Activated CD4-positive, alpha-beta T cell treated with anti-CD3 and anti-CD28 coated beads for 36 hours (primary cell): ENCODE measurements at regions of chr5 and their contacts with region 1.

Region 1: GRCh38 chr5:14644623-14645237 is 19.8 kb upstream of the OTULIN start:
- DNase-seq: no peak
- ATAC-seq: no peak
- H3K4me3 Mint-ChIP-seq: no peak overlapping the region
- H3K27ac Mint-ChIP-seq: no peak overlapping the region
- H3K4me1 Mint-ChIP-seq: no peaks in the 10 kb centered on the region
- H3K27me3 Mint-ChIP-seq: peaks cover 4% of the 10 kb centered on the region

Region 2: DNA sequence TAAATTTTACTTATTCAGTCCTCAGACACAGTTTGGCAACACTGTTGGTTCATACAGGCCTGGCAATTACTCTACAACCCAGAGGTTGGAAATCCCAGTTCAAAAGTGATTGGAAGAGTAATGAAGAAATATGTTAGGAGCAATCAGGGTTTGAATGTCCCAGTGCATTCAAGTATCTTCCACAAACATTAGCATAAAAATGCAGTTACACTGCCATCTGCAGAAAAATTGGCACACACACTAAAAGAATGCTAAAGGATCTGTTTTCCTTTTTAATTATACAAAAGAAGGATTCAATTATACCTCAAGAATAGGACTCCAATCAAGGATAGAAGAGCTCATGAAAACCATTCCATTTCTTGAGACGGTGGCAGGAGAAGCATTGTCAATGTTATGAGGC is 830.4 kb before region 1 on chr5:
- CTCF ChIA-PET with region 1: no interaction called
- POLR2A ChIA-PET with region 1: no interaction called
- intact Hi-C with region 1: no loop called
- DNase-seq: no peak
- ATAC-seq: no peak
- H3K4me3 Mint-ChIP-seq: no peak overlapping the region
- H3K27ac Mint-ChIP-seq: no peak overlapping the region
- H3K4me1 Mint-ChIP-seq: no peaks in the 10 kb centered on the region
- H3K27me3 Mint-ChIP-seq: no peaks in the 10 kb centered on the region

Region 3: DNA sequence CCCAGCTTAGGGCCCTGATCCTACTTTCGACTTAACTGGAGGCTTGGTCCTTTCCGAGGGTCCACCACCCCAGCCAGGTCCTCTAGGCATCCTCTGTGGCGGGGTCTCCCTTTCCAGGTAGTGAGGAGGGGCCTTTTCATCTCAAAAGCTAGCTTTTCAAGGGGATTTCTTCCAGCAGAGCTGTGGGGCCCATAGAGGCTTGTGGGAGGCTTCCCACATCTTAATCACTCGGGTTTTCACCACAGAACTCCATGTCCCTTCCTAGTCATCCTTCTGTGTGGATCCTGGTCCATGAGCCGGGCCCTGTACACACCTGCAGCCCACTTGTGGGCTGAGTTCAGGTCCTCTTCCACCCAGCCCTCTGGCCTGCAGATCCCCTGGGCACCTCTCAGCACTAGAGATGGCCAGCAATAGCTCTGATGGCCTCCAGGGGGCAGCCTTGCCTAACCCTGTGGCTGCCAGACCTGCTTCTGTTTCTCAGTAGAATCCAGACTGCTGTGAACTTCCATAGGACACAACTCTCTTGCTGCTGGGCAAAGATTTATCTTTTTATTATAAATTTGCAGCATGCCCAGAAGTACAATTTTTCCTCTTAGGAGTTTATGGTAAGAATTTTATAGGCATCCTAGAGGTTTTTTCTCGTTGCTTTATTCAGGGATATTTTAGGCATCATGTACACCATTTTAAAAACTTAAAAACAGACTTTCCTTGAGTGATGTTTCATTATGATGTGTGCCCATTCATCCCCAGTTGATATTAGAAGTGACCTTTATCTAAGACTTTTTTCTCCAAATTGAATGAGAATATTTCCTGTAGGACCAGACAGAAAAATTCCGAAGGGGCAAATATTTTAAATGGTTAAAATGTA is 292.7 kb before region 1 on chr5:
- CTCF ChIA-PET with region 1: interaction called, 47 read pairs
- POLR2A ChIA-PET with region 1: interaction called, 3 read pairs
- intact Hi-C with region 1: loop called (anchors 1 kb)
- DNase-seq: peak; percentile 75
- ATAC-seq: peak; percentile 91
- H3K4me3 Mint-ChIP-seq: no peak overlapping the region
- H3K27ac Mint-ChIP-seq: no peak overlapping the region
- H3K4me1 Mint-ChIP-seq: no peaks in the 10 kb centered on the region
- H3K27me3 Mint-ChIP-seq: no peaks in the 10 kb centered on the region

Region 4: DNA sequence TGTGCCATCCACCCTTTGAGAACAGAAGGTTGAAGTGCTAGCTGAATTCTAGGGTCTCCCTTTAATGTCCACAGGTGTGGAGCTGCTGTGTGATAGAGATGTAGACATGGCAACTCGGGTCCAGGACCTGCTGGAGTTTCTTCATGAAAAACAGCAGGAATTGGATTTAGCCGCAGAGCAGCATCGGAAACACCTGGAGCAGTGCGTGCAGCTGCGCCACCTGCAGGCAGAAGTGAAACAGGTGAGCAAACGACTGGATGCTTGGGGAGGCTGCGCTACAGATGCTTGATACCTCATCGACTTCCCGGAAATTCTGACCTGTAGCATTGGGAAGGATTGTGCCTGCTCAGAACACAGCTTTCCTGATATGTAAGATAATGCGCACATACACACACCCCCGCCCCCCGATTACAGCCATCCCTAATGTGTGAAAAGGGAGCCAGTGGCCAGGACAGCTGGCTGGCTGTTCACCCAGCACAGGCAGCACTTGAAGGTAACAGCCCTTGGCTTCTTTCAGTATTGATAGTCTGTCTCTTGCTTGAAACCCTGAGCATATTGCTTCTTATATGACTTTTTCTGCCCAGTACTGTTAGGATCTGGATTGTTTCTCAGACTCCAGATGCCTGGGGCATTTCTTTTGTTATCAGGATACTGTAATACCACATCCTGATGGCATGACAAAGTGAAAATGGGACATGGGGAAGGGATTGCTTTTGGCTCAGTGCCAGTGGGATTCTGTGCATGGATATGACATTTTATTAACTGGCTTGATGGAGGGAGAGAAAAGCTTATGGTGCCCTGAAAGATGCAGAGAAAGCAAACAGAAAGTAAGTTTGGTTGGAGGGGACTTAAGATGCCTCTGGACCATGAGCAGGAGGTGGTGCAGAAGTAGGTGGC is 279.9 kb before region 1 on chr5:
- CTCF ChIA-PET with region 1: interaction called, 124 read pairs
- POLR2A ChIA-PET with region 1: no interaction called
- intact Hi-C with region 1: loop called (anchors 1 kb)
- DNase-seq: peak; percentile 42
- ATAC-seq: peak; percentile 33
- H3K4me3 Mint-ChIP-seq: no peak overlapping the region
- H3K27ac Mint-ChIP-seq: no peak overlapping the region
- H3K4me1 Mint-ChIP-seq: peaks cover 23% of the 10 kb centered on the region
- H3K27me3 Mint-ChIP-seq: no peaks in the 10 kb centered on the region

Region 5: DNA sequence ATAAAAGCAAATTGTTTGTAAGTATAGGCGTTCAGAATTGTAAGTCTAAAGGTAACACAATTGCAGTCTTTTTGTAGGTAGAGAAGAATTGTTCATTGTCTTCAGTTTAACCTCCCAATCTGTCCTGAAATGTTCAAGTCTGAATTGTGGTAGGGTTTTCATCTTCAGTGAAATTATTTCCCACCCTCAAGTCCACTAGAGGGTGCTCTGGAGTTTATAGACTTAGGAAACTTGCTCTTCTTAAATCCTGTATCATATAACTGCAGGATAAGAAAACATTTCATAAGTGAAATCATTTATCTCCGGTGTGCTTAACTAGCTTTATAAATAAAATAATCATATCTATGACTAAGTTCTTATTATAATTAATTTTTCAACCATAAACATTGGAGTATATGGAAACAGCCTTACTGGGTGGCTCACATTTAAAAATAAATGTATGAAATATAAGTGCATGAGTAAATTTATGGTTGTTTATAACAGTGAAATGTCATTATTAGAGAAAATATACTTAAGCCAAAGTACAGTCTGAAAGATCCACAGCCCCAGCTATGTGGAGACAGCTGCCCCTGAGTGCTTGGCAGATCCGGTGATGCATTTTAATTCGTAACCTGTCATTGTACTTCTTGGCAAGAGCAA is 245.6 kb before region 1 on chr5:
- CTCF ChIA-PET with region 1: interaction called, 65 read pairs
- POLR2A ChIA-PET with region 1: no interaction called
- intact Hi-C with region 1: loop called (anchors 1 kb)
- DNase-seq: peak; percentile 30
- ATAC-seq: no peak
- H3K4me3 Mint-ChIP-seq: no peak overlapping the region
- H3K27ac Mint-ChIP-seq: no peak overlapping the region
- H3K4me1 Mint-ChIP-seq: peaks cover 13% of the 10 kb centered on the region
- H3K27me3 Mint-ChIP-seq: no peaks in the 10 kb centered on the region

Region 6: DNA sequence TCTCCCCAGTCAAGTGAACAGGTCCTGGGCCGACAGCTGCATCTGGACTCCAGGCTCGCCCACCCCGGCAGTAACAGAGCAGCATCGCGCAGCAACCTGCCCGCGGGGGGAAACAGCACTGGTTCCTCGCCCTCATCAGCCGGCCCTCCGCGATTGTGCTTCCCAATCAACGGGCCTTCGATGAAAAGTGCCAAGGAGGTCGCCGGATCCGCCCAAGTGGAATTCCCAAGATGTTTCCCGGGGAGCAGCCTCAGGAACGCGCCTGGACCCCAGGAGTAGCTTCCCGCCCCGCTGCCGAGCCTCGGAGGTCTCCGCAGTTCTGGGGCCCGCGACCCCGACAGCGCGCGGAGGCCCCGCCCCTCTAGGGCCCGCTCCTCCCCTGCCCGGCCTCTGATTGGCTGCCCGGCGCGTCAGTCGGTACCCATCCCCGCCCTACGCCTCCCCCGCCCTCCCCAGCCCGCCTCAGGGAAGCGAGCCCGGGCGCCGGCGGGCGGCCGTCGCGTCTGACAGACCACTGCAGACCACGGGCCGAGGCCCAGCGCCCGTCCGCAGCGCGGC is 63.3 kb before region 1 on chr5 and contains the start of gene OTULINL:
- CTCF ChIA-PET with region 1: interaction called, 15 read pairs
- POLR2A ChIA-PET with region 1: interaction called, 3 read pairs
- intact Hi-C with region 1: no loop called
- DNase-seq: peak; percentile 93
- ATAC-seq: peak; percentile 94
- H3K4me3 Mint-ChIP-seq: peak within 1 kb of the TSS; percentile 77
- H3K27ac Mint-ChIP-seq: peak within 1 kb of the TSS; percentile 60
- H3K4me1 Mint-ChIP-seq: peaks cover 30% of the 10 kb centered on the region
- H3K27me3 Mint-ChIP-seq: peaks cover 8% of the 10 kb centered on the region
- total RNA-seq, gene OTULINL: 9.4 to 10.9 TPM